ENCODE measurements at regions of chr5 and their contacts with region 1.

Region 1: GRCh38 chr5:44356231-44356630 is 33.0 kb downstream of the FGF10 start:
- DNase-seq: no peak
- H3K4me3 ChIP-seq: no peak overlapping the region
- H3K27ac ChIP-seq: no peak overlapping the region
- H3K4me1 ChIP-seq: no peaks in the 10 kb centered on the region
- H3K27me3 ChIP-seq: no peaks in the 10 kb centered on the region
- CTCF ChIP-seq: no peak

Region 2: DNA sequence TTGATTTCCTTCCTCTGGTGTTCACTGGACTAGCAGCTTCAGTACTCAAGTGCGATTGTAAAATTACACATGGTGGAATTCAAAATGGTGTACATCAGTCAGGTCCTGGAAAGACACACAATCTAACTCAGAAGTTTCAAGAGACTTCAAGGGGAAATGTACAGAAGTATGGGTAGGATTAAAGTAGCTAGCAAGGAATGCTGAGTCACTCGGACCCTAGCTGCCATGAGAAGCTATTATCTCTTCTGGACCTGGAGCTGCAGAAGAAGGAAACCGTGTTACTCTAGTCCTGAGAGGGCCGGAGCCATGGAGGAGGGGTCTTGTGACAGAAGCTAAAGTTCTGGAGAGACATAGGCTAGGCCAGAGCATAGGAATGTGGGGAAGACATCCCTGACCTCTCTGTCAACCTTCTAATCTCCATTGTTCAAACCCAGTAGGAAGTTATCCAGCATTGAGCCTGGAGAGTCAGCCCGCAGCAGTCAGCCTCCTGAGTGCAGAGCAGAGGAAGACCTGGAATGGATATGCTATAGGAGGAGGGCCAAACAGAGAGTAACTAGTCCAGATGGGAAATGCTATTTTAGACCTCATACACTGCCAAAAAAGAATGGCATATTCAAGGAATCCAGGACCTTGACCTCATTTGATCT is 1848.7 kb before region 1 on chr5:
- CTCF ChIA-PET with region 1: no interaction called
- POLR2A ChIA-PET with region 1: interaction called, 18 read pairs
- intact Hi-C with region 1: no loop called
- DNase-seq: no peak
- H3K4me3 ChIP-seq: no peak overlapping the region
- H3K27ac ChIP-seq: no peak overlapping the region
- H3K4me1 ChIP-seq: no peaks in the 10 kb centered on the region
- H3K27me3 ChIP-seq: no peaks in the 10 kb centered on the region
- CTCF ChIP-seq: no peak

Region 3: GRCh38 chr5:44252545-44252944 is 103.7 kb before region 1 on chr5:
- CTCF ChIA-PET with region 1: no interaction called
- POLR2A ChIA-PET with region 1: no interaction called
- intact Hi-C with region 1: no loop called
- DNase-seq: no peak
- H3K4me3 ChIP-seq: no peak overlapping the region
- H3K27ac ChIP-seq: no peak overlapping the region
- H3K4me1 ChIP-seq: no peaks in the 10 kb centered on the region
- H3K27me3 ChIP-seq: no peaks in the 10 kb centered on the region
- CTCF ChIP-seq: no peak

Region 4: GRCh38 chr5:44389090-44389822 is 33.0 kb after region 1 on chr5 and contains the start of gene FGF10:
- CTCF ChIA-PET with region 1: no interaction called
- POLR2A ChIA-PET with region 1: no interaction called
- intact Hi-C with region 1: loop called (anchors 2 kb)
- DNase-seq: no peak
- H3K4me3 ChIP-seq: no peak within 1 kb of the TSS; the same call in 1 of the 2 replicates
- H3K27ac ChIP-seq: no peak within 1 kb of the TSS
- H3K4me1 ChIP-seq: no peaks in the 10 kb centered on the region
- H3K27me3 ChIP-seq: peaks cover 45% of the 10 kb centered on the region
- CTCF ChIP-seq: no peak
- total RNA-seq, gene FGF10: not detected in 2 replicates

Measured in PC-9 (cell line).